GM10248 (cell line): ENCODE measurements at regions of chr12 and their contacts with region 1.

Region 1: DNA sequence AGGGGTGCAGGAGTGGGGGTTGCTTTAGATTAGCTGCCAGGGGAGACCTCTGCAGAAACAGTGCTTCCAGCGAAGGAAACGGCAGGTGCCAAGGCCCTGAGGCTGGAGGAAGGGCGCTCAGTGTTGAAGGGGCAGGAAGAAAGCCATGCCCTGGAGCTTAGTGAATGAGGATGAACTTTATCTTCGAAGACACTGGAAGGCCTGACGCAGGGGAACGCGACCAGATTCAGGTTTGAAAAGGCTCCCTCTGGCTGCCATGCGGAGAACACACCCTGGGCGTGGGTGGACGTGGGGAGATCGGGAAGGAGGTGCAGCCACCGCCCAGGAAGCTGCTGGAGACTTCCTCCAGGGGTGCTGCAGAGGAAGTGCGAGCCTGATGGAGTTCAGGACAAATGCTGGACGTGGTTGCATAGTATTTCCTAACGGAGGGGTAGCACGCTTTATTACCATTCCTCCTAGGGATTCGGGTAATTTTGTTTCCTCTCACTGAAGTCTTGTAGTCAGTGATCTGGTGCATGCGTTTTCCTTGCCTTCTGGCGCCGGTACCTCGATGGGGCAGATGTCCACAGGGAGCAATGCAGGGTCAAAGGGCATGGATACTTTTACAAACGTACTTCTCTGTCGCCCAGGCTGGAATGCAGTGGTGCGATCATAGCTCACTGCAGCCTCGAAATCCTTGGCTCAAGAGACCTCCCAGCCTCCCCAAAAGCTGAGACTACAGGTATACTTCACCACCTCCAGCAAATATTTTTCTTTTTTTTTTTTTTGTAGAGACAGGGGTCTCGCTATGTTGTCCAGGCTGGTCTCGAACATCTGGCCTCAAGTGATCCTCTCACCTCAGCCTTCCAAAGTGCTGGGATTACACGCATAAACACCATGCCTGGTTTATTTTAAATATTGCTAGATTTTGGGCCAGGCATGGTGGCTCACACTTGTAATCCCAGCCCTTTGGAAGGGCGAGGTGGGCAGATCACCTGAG is 26.4 kb upstream of the UBC start:
- DNase-seq: peak; percentile 79
- CTCF ChIP-seq: peak; percentile 90

Region 2: GRCh38 chr12:124917135-124917840 is 23.6 kb before region 1 on chr12:
- CTCF ChIA-PET with region 1: interaction called, 193 read pairs
- POLR2A ChIA-PET with region 1: interaction called, 16 read pairs
- DNase-seq: peak; percentile 78
- CTCF ChIP-seq: no peak

Region 3: GRCh38 chr12:124927201-124928094 is 13.4 kb before region 1 on chr12:
- CTCF ChIA-PET with region 1: interaction called, 193 read pairs
- POLR2A ChIA-PET with region 1: interaction called, 8 read pairs
- DNase-seq: peak; percentile 85
- CTCF ChIP-seq: no peak

Region 4: DNA sequence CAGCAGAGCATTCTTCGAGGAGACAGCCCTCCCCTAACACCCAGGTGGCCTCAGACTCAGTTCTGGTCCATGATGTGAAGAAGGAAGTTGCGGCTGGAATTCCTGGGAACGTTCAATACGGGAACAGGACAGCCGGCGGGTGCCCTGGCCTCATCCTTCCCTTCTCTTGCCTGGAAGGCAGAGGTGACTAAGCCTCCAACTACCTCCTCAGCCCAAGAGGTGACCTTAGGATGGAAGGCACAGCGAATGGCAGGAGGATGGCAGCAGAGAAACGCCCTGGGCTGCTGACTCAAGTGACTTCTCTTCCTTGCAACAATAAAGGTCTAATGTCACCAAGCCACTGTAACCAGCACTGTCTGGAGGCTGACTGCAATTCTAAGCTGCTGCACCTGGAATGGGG is 12.0 kb after region 1 on chr12:
- CTCF ChIA-PET with region 1: interaction called, 25 read pairs
- POLR2A ChIA-PET with region 1: interaction called, 4 read pairs
- DNase-seq: no peak
- CTCF ChIP-seq: no peak

Region 5: GRCh38 chr12:125015680-125016310 is 75.0 kb after region 1 on chr12:
- CTCF ChIA-PET with region 1: no interaction called
- POLR2A ChIA-PET with region 1: no interaction called
- DNase-seq: no peak
- CTCF ChIP-seq: no peak